Caco-2 (cell line): ENCODE measurements at regions of chr12 and their contacts with region 1.

Region 1: GRCh38 chr12:47231456-47231855 is 151.7 kb upstream of the AMIGO2 start:
- DNase-seq: peak; percentile 78 to 82
- H3K4me3 ChIP-seq: no peak overlapping the region
- H3K4me3 Mint-ChIP-seq: peak overlapping the region; percentile 52
- H3K27ac Mint-ChIP-seq: peak overlapping the region; percentile 55
- H3K4me1 ChIP-seq: peaks cover 57% of the 10 kb centered on the region
- H3K4me1 Mint-ChIP-seq: peaks cover 21% of the 10 kb centered on the region
- H3K27me3 ChIP-seq: no peaks in the 10 kb centered on the region; the same call in 1 of the 2 replicates
- H3K27me3 Mint-ChIP-seq: no peaks in the 10 kb centered on the region
- CTCF ChIP-seq: no peak

Region 2: DNA sequence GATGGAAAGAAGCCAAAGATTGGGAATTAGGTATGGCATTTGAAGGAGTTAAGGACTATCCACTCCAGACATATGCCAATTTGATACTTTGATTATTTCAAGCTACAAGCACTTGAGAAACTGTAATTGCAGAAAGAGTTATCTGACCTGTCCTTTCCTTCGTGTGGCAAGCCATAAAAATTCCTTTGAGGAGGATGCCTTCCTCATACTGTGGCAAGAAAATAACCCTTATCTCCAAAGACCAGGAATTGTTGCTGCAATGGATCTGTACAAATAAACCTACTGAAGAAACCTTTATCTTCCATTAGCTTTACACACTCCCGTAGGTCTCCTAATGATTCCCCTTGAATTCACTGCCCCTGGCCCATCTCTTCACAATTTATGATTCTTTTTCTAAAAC is 13.4 kb after region 1 on chr12:
- CTCF ChIA-PET with region 1: no interaction called
- POLR2A ChIA-PET with region 1: no interaction called
- intact Hi-C with region 1: loop called (anchors 1 kb)
- DNase-seq: peak; percentile 44 to 48
- H3K4me3 ChIP-seq: no peak overlapping the region
- H3K4me3 Mint-ChIP-seq: no peak overlapping the region
- H3K27ac Mint-ChIP-seq: peak overlapping the region; percentile 12
- H3K4me1 ChIP-seq: peaks cover 31% of the 10 kb centered on the region
- H3K4me1 Mint-ChIP-seq: peaks cover 29% of the 10 kb centered on the region
- H3K27me3 ChIP-seq: no peaks in the 10 kb centered on the region
- H3K27me3 Mint-ChIP-seq: no peaks in the 10 kb centered on the region
- CTCF ChIP-seq: no peak

Region 3: GRCh38 chr12:47276621-47277309 is 45.3 kb after region 1 on chr12:
- CTCF ChIA-PET with region 1: no interaction called
- POLR2A ChIA-PET with region 1: no interaction called
- intact Hi-C with region 1: loop called (anchors 2 kb)
- DNase-seq: peak; percentile 48 to 49
- H3K4me3 ChIP-seq: no peak overlapping the region
- H3K4me3 Mint-ChIP-seq: no peak overlapping the region
- H3K27ac Mint-ChIP-seq: peak overlapping the region; percentile 6
- H3K4me1 ChIP-seq: peaks cover 26% of the 10 kb centered on the region
- H3K4me1 Mint-ChIP-seq: peaks cover 17% of the 10 kb centered on the region
- H3K27me3 ChIP-seq: no peaks in the 10 kb centered on the region
- H3K27me3 Mint-ChIP-seq: no peaks in the 10 kb centered on the region
- CTCF ChIP-seq: no peak

Region 4: DNA sequence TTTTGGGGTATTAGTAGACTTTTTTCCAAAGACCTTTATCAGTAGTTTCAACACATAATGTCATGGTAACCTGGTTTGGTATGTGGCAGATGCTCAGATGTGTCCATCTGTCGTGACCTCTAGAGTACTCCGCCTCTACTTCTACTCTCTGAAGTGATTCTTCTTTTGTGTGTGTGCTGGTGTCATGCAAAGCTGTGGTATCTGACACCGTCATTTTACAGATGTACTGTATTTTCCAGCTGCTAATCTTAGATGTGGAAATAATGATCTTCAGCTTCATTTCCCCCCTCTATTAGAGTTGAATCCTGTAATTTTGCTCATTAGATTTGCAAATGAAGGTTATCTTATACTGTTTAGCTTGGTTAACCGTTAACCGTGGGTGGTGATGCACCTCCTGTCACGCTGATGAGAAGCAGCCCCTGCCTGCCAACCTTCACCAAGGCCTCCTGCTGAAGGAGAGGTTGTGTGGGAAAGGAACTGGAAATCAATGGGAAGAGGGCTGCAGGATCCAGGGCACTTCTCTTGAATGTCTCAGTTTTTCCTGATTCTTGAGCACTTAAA is 70.7 kb after region 1 on chr12:
- CTCF ChIA-PET with region 1: interaction called, 3 read pairs
- POLR2A ChIA-PET with region 1: no interaction called
- intact Hi-C with region 1: loop called (anchors 1 kb)
- DNase-seq: peak; percentile 59 to 67
- H3K4me3 ChIP-seq: no peak overlapping the region
- H3K4me3 Mint-ChIP-seq: peak overlapping the region; percentile 37
- H3K27ac Mint-ChIP-seq: peak overlapping the region; percentile 88
- H3K4me1 ChIP-seq: peaks cover 37% of the 10 kb centered on the region
- H3K4me1 Mint-ChIP-seq: peaks cover 42% of the 10 kb centered on the region
- H3K27me3 ChIP-seq: no peaks in the 10 kb centered on the region
- H3K27me3 Mint-ChIP-seq: no peaks in the 10 kb centered on the region
- CTCF ChIP-seq: no peak